ENCODE measurements at regions of chr11 and their contacts with region 1.

Region 1: DNA sequence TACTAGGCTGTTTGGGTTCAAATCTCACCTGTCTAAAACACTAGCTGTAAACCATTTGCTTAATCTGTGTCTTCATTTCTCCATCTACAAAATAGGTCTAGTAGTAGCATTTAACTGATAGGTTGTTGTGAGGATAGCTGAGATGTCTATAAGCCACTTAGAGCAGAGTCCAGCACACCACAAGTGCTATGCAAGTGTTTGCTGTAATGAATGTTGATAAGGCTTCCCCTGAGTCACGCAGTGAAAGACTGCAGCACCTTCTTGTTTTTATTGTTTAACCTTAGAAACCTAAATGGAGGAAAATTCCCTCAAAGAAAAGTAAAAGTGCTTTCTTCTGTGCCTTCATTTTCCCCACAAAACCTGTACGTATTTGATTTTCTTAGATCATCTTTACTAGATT is 23.1 kb upstream of the LDHA start:
- DNase-seq: peak; percentile 18 to 57 (median 38)
- ATAC-seq: peak; percentile 87
- H3K4me3 ChIP-seq: no peak overlapping the region
- H3K27ac ChIP-seq: peak overlapping the region; percentile 27; the same call in 1 of the 3 replicates
- H3K4me1 ChIP-seq: peaks cover 0 to 7% of the 10 kb centered on the region in 2 experiments; a peak in 2 of 5 replicates
- H3K27me3 ChIP-seq: no peaks in the 10 kb centered on the region
- CTCF ChIP-seq: no peak
- EP300 ChIP-seq: no peak
- POLR2A ChIP-seq: no peak
- RAD21 ChIP-seq: no peak

Region 2: DNA sequence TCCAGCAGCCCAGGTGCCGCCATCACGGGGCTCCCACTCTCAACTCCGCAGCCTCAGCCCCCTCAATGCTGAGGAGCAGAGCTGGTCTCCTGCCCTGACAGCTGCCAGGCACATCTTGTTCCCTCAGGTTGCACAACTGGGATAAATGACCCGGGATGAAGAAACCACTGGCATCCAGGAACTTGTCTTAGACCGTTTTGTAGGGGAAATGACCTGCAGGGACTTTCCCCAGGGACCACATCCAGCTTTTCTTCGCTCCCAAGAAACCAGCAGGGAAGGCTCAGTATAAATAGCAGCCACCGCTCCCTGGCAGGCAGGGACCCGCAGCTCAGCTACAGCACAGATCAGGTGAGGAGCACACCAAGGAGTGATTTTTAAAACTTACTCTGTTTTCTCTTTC is 105.3 kb before region 1 on chr11 and contains the start of gene SAA1:
- CTCF ChIA-PET with region 1: no interaction called
- POLR2A ChIA-PET with region 1: no interaction called
- in situ Hi-C with region 1: no loop called
- intact Hi-C with region 1: no loop called
- DNase-seq: no peak
- ATAC-seq: no peak
- H3K4me3 ChIP-seq: no peak within 1 kb of the TSS
- H3K27ac ChIP-seq: no peak within 1 kb of the TSS
- H3K4me1 ChIP-seq: no peaks in the 10 kb centered on the region
- H3K27me3 ChIP-seq: peaks cover 17 to 43% of the 10 kb centered on the region in 2 experiments; a peak in 4 of 5 replicates
- CTCF ChIP-seq: no peak
- EP300 ChIP-seq: no peak
- POLR2A ChIP-seq: no peak
- RAD21 ChIP-seq: no peak
- polyA plus RNA-seq, gene SAA1: not detected

Region 3: DNA sequence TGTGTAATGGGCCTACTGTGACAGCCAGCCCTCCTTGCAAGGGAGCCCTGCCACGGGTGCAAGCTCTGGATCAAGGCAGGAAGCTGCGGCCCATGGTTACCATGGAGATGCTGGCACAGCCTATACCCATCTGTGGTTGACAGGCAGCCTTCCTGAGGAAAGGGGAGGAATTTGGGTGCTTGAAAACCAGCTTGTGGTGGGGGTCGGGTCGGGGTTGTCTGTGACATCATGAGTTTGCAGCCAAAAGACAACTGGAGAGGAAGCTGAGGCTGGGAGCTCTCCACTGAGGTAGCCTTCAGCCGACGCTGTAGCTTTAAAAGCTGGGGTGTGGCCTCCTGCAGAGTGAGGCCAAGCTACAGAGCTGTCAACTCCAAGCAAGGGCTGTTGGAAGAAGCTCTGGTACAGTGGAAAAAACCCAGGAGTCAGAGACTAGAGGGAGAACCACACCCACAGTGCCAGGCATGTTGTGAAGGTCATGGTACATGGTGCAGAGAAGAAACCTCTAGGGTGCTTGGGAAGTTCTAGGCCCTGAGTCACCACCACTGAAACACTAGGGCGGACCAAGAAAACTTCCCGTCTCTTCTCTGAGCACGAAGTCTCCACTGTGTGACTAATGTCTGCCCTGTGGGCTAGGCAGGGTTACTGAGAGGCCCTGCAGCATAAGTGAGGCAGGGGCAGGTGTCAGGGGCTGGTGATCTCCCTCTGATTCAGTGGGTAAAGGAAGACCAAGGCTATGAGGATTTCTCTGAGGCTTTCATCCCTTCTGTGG is 12.3 kb after region 1 on chr11:
- CTCF ChIA-PET with region 1: no interaction called
- POLR2A ChIA-PET with region 1: interaction called, 21 read pairs
- in situ Hi-C with region 1: no loop called
- intact Hi-C with region 1: no loop called
- DNase-seq: peak; percentile 23 to 59 (median 42)
- ATAC-seq: peak; percentile 84
- H3K4me3 ChIP-seq: no peak overlapping the region
- H3K27ac ChIP-seq: peak overlapping the region; percentile 81
- H3K4me1 ChIP-seq: peaks cover 10 to 18% of the 10 kb centered on the region in 2 experiments; a peak in 4 of 5 replicates
- H3K27me3 ChIP-seq: no peaks in the 10 kb centered on the region
- CTCF ChIP-seq: no peak
- EP300 ChIP-seq: no peak
- POLR2A ChIP-seq: no peak
- RAD21 ChIP-seq: no peak

Region 4: DNA sequence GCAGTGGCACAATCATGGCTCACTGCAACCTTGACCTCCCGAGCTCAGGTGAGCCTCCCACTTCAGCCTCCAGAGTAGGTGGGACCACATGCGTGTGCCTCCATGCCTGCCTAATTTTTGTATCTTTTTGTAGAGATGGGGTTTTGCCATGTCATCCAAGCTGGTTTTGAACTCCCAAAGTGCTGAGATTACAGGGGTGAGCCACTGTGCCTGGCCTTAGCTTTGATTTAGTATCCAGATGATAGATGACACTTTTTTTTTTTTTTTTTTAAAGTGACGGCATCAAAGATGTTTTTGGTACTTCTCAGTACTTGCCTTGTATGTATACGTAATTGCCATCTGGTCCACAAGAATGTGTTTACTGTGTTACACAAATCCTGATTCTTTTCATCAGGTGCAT is 107.8 kb after region 1 on chr11:
- CTCF ChIA-PET with region 1: no interaction called
- POLR2A ChIA-PET with region 1: no interaction called
- in situ Hi-C with region 1: no loop called
- intact Hi-C with region 1: no loop called
- DNase-seq: no peak
- ATAC-seq: no peak
- H3K4me3 ChIP-seq: no peak overlapping the region
- H3K27ac ChIP-seq: no peak overlapping the region
- H3K4me1 ChIP-seq: no peaks in the 10 kb centered on the region
- H3K27me3 ChIP-seq: no peaks in the 10 kb centered on the region
- CTCF ChIP-seq: no peak
- EP300 ChIP-seq: no peak
- POLR2A ChIP-seq: no peak
- RAD21 ChIP-seq: no peak

Measured in K562 (cell line).